ENCODE measurements at regions of chr1 and their contacts with region 1.

Region 1: DNA sequence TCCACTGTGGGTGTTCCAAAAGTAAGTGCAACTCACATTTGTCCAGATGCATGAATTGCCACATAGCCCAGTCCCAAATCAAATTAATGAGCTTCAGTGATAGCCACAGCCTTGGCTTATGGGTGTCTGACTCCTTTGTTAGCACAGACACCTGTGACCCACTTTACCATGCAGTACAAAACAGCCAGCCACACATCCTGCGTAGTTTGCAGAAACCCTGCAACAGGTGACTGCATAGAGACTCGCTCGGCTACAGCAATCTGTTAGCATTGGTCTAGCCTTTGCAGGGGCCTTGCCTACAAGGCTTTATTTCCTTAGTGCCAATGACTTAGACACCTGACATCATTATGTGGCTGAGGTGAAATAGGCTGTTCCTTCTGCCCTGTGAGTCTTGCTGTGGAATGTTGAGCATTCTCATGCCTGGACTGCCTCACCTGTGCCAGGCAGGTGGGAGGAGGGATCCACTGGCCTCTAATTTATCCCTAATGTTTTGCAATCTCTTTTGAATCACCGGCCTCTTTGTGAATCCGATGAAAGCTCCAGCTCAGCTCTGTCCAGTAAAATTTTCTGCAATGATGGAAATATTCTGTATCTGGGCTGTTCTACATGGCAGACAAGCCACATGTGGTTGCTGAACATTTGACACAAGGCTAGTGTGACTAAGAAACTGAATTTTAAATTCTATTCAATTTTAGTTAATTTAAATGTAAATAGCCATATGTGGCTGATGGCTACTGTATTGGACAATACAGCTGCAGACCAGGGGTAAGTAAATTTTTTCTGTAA is 135.3 kb downstream of the CSMD2 start:
- DNase-seq: no peak
- H3K4me3 ChIP-seq: no peak overlapping the region
- CTCF ChIP-seq: no peak
- POLR2A ChIP-seq: no peak

Region 2: GRCh38 chr1:33396188-33397124 is 633.3 kb before region 1 on chr1:
- intact Hi-C with region 1: loop called (anchors 5 kb)
- DNase-seq: no peak
- H3K4me3 ChIP-seq: no peak overlapping the region
- CTCF ChIP-seq: no peak
- POLR2A ChIP-seq: no peak

Region 3: DNA sequence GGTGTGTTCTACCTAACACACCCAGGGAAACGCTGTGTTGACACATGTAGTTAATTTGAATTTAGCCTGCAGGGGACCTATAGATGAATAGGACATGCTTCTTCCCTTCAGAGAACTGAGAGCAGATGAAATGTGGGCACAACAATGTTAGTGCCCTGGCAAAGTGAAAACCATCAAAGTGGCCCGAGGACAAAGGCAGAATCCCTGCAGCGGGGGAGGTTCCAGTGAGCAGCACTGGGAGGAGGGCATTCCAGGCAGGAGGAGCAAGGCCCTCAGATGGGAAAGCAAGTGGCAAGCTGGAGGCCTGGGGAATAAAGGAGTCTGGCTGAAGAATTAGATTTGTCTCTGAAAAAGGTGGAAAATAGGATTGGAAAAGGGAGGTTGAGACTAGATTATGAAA is 184.2 kb after region 1 on chr1:
- intact Hi-C with region 1: no loop called
- DNase-seq: no peak
- H3K4me3 ChIP-seq: no peak overlapping the region
- CTCF ChIP-seq: no peak
- POLR2A ChIP-seq: no peak

Measured in lower leg skin (tissue), 4 donors.